ENCODE measurements at regions of chr9 and their contacts with region 1.

Region 1: GRCh38 chr9:20356403-20357035 is 265.8 kb downstream of the MLLT3 start:
- DNase-seq: peak; percentile 81 to 85
- H3K4me3 ChIP-seq: no peak overlapping the region
- H3K27ac ChIP-seq: peak overlapping the region; percentile 23 to 66 (median 43)
- H3K4me1 ChIP-seq: peaks cover 18 to 32% of the 10 kb centered on the region in 2 donors
- H3K27me3 ChIP-seq: no peaks in the 10 kb centered on the region
- CTCF ChIP-seq: peak in 5 of 6 experiments; percentile 42 to 94 (median 79)
- POLR2A ChIP-seq: no peak

Region 2: DNA sequence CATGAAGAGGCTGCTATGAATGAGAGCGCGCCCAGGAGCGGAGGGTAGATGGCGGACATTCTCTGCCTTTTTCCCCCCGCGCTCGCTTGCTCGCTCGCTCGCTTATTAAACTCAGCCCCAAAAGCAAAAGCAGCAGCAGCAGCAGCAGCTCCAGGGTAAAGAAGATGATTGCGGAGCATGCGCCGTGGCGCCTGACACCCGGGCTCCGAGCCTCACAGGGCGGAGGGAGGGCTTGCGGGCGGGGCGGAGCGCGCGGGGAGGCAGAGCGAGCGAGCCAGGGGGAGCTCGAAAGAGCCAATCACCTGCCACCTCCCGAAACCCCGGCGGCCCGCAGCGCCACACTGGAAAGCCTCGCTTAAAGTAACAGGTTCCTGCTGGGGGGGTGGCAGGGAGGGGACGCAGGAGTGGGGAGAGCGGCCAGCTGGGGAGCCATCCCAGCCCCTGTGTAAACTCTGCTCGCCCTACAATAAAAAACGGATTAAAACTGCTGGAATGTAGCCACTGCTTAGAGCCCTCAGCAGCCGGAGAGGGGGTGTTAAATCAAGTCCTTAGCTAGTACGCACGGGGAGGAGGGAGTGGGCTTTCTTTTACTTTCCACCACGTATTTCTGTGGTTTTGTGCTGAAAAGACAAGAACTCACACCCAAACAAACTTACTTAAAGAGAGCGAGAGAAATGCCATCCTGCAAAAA is 266.0 kb after region 1 on chr9 and contains the start of gene MLLT3:
- intact Hi-C with region 1: loop called (anchors 10 kb)
- DNase-seq: peak; percentile 98
- H3K4me3 ChIP-seq: peak within 1 kb of the TSS; percentile 85 to 98 (median 95)
- H3K27ac ChIP-seq: peak within 1 kb of the TSS; percentile 90 to 97 (median 95)
- H3K4me1 ChIP-seq: peaks cover 6 to 14% of the 10 kb centered on the region in 2 donors
- H3K27me3 ChIP-seq: no peaks in the 10 kb centered on the region
- CTCF ChIP-seq: no peak
- POLR2A ChIP-seq: peak in 1 of 2 donors; percentile 95
- total RNA-seq, gene MLLT3: 29.8 to 51.0 (median 47.1) TPM

Region 3: GRCh38 chr9:21110708-21111576 is 754.4 kb after region 1 on chr9:
- intact Hi-C with region 1: loop called (anchors 10 kb)
- DNase-seq: no peak
- H3K4me3 ChIP-seq: no peak overlapping the region
- H3K27ac ChIP-seq: peak overlapping the region in 2 of 3 donors; percentile 65 to 80
- H3K4me1 ChIP-seq: peaks cover 25 to 26% of the 10 kb centered on the region in 2 donors
- H3K27me3 ChIP-seq: no peaks in the 10 kb centered on the region
- CTCF ChIP-seq: peak; percentile 65 to 94 (median 78)
- POLR2A ChIP-seq: no peak

Measured in thyroid gland (tissue), 4 donors.